Heart right ventricle (tissue), 16 donors: ENCODE measurements at regions of chr4 and their contacts with region 1.

Region 1: DNA sequence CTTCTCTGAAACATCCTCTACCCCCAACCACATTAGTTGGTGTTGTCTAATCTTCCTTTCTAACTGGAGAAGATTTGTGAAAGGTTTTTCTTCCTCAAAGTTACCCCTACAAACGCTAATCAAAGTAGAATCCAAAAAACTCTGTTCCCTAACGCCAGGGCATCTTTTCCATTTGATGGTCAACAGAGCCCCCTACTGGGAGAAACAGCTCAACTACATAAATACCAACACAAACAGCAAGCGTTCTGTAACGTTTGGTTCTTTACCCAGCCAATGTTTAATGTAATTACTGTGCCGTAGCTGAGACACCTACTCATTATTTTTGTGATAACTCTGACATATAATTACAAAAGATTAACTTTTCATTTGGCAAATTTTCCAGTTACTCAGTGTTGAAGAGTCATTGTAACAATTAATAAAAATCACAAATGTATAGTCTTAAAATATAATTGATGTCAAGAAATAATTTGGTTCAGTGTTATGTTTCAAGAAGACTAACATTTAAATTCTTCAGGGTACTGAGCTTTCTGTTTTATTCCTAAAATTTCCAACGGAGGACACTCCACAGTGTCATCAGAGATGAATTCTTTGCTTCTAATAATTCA is 94.9 kb upstream of the TBC1D9 start:
- DNase-seq: peak in 1 of 2 donors; percentile 63
- ATAC-seq: peak in 6 of 8 donors; percentile 58 to 71 (median 64)
- H3K4me3 ChIP-seq: no peak overlapping the region
- H3K27ac ChIP-seq: no peak overlapping the region
- H3K4me1 ChIP-seq: peaks cover 0 to 19% (median 0%) of the 10 kb centered on the region in 9 donors
- H3K27me3 ChIP-seq: no peaks in the 10 kb centered on the region
- CTCF ChIP-seq: peak; percentile 59 to 92 (median 78)

Region 2: GRCh38 chr4:140315970-140316369 is 535.2 kb before region 1 on chr4:
- intact Hi-C with region 1: no loop called
- DNase-seq: no peak
- ATAC-seq: no peak
- H3K4me3 ChIP-seq: no peak overlapping the region
- H3K27ac ChIP-seq: no peak overlapping the region
- H3K4me1 ChIP-seq: peaks cover 0 to 9% (median 0%) of the 10 kb centered on the region in 9 donors
- H3K27me3 ChIP-seq: no peaks in the 10 kb centered on the region
- CTCF ChIP-seq: no peak

Region 3: GRCh38 chr4:140359562-140360427 is 491.3 kb before region 1 on chr4:
- intact Hi-C with region 1: loop called in 9 of 10 experiments (anchors 1 to 10 kb)
- DNase-seq: peak; percentile 29 to 69
- ATAC-seq: peak; percentile 59 to 89 (median 82)
- H3K4me3 ChIP-seq: no peak overlapping the region
- H3K27ac ChIP-seq: no peak overlapping the region
- H3K4me1 ChIP-seq: peaks cover 0 to 7% (median 0%) of the 10 kb centered on the region in 9 donors
- H3K27me3 ChIP-seq: peaks cover 0 to 7% (median 0%) of the 10 kb centered on the region in 7 donors
- CTCF ChIP-seq: peak; percentile 58 to 85 (median 77)

Region 4: DNA sequence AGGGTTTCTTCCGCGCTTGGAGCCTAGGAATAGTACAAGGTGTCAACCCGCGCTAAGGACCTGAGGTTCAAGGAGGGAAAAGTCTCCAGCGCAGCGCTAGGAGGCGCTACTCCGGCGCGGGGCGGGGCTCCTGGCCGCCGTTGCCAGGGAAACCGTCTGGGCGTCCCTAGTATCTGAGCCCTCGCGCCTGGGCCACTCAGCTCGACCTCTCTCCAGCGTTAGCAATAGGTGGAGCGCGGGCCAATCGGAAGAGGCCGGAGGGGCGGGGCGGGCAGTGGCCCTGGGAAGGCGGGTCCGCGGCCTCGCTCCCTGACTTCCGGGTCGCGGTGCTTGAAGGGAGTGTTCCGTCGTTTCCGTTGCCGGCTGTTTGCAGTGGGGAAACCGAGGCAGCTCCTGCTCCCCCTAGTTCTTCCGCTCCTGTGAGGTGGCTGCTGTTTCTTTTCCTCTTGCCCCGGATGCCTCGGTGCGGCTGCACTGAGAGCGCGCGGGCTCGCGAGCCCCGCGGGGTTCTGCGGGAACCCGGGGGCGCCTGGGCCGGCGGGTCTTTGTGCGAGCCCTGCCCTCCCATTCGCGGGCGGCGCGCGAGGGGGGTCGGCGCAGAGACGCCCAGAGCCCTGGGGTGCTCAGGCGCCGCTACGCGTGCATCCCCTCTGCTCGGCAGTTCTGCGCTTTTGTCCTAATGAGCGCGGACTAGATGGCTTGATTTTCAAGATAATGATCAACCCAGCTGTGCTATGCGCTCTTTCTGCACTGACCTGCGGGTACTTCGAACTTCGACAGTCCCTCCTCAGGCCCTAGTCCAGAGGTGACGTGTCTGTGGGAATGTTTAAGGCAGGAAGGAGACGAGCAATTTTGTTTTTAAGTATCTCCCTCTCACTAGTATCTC is 327.0 kb before region 1 on chr4 and contains the start of gene ELMOD2:
- intact Hi-C with region 1: loop called in 5 of 10 experiments (anchors 2 to 10 kb)
- DNase-seq: peak; percentile 99
- ATAC-seq: peak; percentile 100
- H3K4me3 ChIP-seq: peak within 1 kb of the TSS; percentile 66 to 98 (median 86)
- H3K27ac ChIP-seq: peak within 1 kb of the TSS; percentile 38 to 94 (median 87)
- H3K4me1 ChIP-seq: peaks cover 0 to 40% (median 18%) of the 10 kb centered on the region in 9 donors
- H3K27me3 ChIP-seq: no peaks in the 10 kb centered on the region
- CTCF ChIP-seq: peak; percentile 82 to 99 (median 94)
- total RNA-seq, gene ELMOD2: 14.3 to 20.3 (median 17.4) TPM

Region 5: GRCh38 chr4:140595065-140595464 is 256.1 kb before region 1 on chr4:
- intact Hi-C with region 1: loop called in 2 of 10 experiments (anchors 5 to 10 kb)
- DNase-seq: no peak
- ATAC-seq: peak in 4 of 8 donors; percentile 51 to 69 (median 63)
- H3K4me3 ChIP-seq: no peak overlapping the region
- H3K27ac ChIP-seq: no peak overlapping the region
- H3K4me1 ChIP-seq: no peaks in the 10 kb centered on the region
- H3K27me3 ChIP-seq: peaks cover 0 to 4% (median 0%) of the 10 kb centered on the region in 7 donors
- CTCF ChIP-seq: peak; percentile 20 to 63 (median 48)

Region 6: GRCh38 chr4:140609548-140610425 is 241.3 kb before region 1 on chr4:
- intact Hi-C with region 1: loop called in 2 of 10 experiments (anchors 10 kb)
- DNase-seq: no peak
- ATAC-seq: peak; percentile 74 to 90 (median 86)
- H3K4me3 ChIP-seq: peak overlapping the region in 1 of 10 donors; percentile 4
- H3K27ac ChIP-seq: peak overlapping the region in 8 of 10 donors; percentile 17 to 75 (median 39)
- H3K4me1 ChIP-seq: peaks cover 0 to 14% (median 4%) of the 10 kb centered on the region in 9 donors
- H3K27me3 ChIP-seq: no peaks in the 10 kb centered on the region
- CTCF ChIP-seq: peak; percentile 42 to 74 (median 62)

Region 7: GRCh38 chr4:140637836-140638235 is 213.3 kb before region 1 on chr4:
- intact Hi-C with region 1: loop called in 4 of 10 experiments (anchors 5 to 10 kb)
- DNase-seq: no peak
- ATAC-seq: peak in 1 of 8 donors; percentile 43
- H3K4me3 ChIP-seq: no peak overlapping the region
- H3K27ac ChIP-seq: no peak overlapping the region
- H3K4me1 ChIP-seq: peaks cover 0 to 23% (median 13%) of the 10 kb centered on the region in 9 donors
- H3K27me3 ChIP-seq: no peaks in the 10 kb centered on the region
- CTCF ChIP-seq: peak in 8 of 9 donors; percentile 29 to 57 (median 44)

Region 8: GRCh38 chr4:140743194-140743931 is 107.8 kb before region 1 on chr4:
- intact Hi-C with region 1: loop called in 1 of 10 experiments (anchors 10 kb)
- DNase-seq: no peak
- ATAC-seq: peak in 5 of 8 donors; percentile 45 to 58 (median 54)
- H3K4me3 ChIP-seq: no peak overlapping the region
- H3K27ac ChIP-seq: peak overlapping the region in 1 of 10 donors; percentile 37
- H3K4me1 ChIP-seq: peaks cover 0 to 57% (median 42%) of the 10 kb centered on the region in 9 donors
- H3K27me3 ChIP-seq: no peaks in the 10 kb centered on the region
- CTCF ChIP-seq: peak in 5 of 9 donors; percentile 22 to 51 (median 36)

Region 9: DNA sequence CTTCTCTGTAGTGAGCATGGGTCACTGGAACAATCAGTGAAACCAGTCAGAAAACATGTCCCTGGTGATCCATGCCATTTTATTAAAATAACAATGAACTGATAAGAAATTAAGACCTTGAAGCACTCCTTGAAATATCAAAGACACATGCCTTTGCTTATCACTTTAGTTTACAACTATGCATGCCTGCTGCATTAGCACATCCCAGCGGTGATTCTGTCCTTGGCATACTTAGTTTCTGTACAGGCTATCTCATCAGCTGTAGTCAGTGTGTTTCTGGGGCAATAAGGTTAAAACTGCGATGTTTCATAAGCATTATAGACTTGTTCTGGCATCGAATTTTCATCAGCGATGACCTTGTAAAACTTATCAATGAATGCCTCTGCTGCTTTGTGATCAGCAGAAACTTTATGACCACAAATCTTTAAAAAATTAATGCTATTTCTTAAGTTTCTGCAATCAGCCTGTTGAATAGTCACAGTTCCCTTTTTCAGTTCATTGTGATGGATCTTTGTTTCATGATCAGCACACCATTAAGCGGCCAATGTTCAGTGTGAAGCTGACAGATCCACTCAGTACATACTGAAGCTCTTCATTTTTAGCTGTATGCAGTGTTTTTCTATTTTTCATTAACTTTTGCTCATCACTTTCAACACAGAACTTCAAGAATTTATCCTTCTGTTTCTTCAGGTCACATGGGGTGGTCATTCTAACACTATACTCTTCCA is 131.6 kb after region 1 on chr4:
- intact Hi-C with region 1: no loop called
- DNase-seq: no peak
- ATAC-seq: peak in 7 of 8 donors; percentile 39 to 88 (median 79)
- H3K4me3 ChIP-seq: no peak overlapping the region
- H3K27ac ChIP-seq: peak overlapping the region in 6 of 10 donors; percentile 1 to 77 (median 56)
- H3K4me1 ChIP-seq: peaks cover 0 to 59% (median 12%) of the 10 kb centered on the region in 9 donors
- H3K27me3 ChIP-seq: no peaks in the 10 kb centered on the region
- CTCF ChIP-seq: peak in 1 of 9 donors; percentile 4

Region 10: DNA sequence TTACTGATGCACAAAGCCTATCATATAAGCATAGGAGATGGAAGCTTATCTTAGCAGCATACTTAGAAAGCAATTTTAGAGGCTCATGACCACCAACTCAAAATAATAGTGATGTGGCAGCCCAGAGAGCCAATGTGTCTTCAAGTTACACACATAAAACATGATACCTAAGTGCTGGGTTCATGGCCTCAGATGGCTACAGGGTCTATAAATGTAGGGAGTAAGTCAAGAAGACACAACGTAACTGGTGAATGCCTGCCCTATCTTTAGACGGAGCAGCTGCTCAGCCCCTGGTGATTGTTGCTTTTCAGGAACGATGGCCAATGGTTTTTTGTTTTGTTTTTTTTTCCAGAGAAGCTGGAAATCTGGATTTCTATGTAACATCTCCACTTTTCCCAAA is 239.3 kb after region 1 on chr4:
- intact Hi-C with region 1: no loop called
- DNase-seq: no peak
- ATAC-seq: peak in 1 of 8 donors; percentile 63
- H3K4me3 ChIP-seq: no peak overlapping the region
- H3K27ac ChIP-seq: no peak overlapping the region
- H3K4me1 ChIP-seq: peaks cover 0 to 15% (median 0%) of the 10 kb centered on the region in 9 donors
- H3K27me3 ChIP-seq: no peaks in the 10 kb centered on the region
- CTCF ChIP-seq: no peak